BJ (cell line): ENCODE measurements at regions of chr13 and their contacts with region 1.

Region 1: GRCh38 chr13:98466634-98467236 is 110.2 kb downstream of the STK24 start:
- DNase-seq: no peak
- H3K4me3 ChIP-seq: no peak overlapping the region
- H3K27me3 ChIP-seq: no peaks in the 10 kb centered on the region
- CTCF ChIP-seq: peak; percentile 76

Region 2: DNA sequence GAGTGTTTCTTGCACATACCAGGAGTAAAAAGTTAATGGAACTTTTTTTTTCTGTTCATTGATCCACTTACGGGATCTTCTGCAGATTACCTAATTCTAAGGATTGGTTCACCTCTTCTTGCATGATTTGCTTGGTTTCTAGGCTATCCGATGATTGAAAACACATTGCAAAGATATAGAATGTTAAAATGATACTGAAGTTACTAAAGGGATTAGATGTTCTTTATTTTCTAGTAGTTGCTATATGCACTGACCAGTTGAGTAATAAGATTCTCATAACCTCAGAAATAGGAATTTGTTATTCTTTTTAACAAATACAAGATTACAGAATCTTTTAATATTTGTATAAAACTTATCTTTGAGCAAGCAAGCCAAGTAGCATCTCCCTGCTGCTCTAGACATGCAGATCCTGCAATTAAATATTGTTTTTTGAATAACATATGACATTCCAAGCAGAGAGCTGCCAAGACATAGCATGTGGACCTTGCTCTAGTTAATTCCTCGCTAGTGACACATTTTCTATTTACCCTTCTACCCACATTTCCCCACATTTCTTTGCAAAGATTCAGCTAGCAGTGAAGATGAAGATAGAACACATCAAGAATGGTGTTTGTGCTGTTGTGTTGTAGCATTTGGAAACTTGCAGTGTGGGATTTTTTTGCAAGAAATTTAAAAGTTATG is 237.9 kb before region 1 on chr13:
- CTCF ChIA-PET with region 1: no interaction called
- POLR2A ChIA-PET with region 1: no interaction called
- DNase-seq: peak; percentile 89
- H3K4me3 ChIP-seq: no peak overlapping the region
- H3K27me3 ChIP-seq: no peaks in the 10 kb centered on the region
- CTCF ChIP-seq: no peak

Region 3: DNA sequence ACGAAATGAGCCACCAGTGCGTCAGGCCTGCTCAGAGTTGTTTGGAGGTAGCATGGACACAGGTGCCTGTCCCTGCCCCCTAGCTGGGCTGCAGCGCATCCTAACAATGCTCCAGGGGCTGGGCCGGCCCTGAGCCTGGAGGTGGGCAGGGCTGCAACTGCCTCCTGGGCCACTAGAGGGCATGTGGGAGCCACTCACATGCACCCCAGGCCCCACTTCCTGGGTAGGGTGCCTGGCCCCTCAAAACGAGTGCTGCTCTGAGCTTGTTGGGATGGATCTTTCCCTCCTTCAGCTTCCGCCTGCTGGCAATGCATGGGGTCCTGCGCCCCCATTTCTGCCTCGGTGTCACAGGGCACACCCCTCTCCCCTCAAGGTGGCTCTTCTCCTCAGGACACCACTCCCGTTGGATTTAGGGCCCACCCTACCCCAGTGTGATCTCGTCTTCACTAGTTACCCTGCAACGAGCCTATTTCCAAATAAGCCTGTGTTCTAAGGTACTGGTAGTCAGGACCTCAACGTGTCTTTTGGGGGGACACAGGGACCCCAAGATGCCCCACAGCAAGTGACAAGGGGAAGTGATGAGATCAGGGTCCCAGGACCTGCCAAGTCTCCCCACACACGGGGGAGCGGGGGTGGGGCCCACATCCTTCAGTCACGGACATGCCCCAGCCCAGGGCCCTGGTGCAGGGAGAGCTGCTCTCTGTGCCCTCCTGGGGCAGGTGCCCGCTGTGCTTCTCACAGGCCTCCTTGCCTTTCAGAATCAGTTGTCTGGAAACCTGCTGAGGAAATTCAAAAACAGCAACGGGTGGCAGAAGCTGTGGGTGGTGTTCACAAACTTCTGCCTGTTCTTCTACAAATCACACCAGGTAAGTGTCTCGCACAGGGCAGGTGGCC is 21.1 kb before region 1 on chr13:
- CTCF ChIA-PET with region 1: interaction called, 15 read pairs
- POLR2A ChIA-PET with region 1: no interaction called
- DNase-seq: no peak
- H3K4me3 ChIP-seq: no peak overlapping the region
- H3K27me3 ChIP-seq: no peaks in the 10 kb centered on the region
- CTCF ChIP-seq: peak; percentile 99

Region 4: DNA sequence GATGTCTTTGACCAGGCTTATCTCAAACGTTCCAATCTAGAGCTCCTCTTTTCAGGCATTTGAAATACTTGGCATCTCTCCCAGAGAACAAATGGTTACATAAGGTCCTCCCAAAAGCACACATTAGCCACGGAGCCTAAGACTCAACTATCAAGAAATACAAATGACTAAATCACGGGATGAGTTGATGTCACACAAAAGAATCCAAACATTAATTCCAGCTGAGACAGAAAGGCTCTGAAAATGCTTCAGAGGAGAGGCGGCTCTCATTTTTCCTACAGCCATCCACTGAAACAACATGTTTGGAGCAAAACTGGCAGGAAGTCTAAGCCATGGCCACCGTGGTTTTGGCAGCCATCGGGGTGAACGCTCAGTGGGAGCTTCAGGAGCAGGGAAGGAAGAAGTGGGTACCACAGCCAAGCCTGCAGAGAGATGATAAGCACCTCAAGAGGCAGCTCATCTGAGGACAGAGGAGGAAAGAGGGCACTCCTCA is 12.3 kb before region 1 on chr13:
- CTCF ChIA-PET with region 1: interaction called, 33 read pairs
- POLR2A ChIA-PET with region 1: interaction called, 3 read pairs
- DNase-seq: peak; percentile 87
- H3K4me3 ChIP-seq: no peak overlapping the region
- H3K27me3 ChIP-seq: no peaks in the 10 kb centered on the region
- CTCF ChIP-seq: no peak

Region 5: DNA sequence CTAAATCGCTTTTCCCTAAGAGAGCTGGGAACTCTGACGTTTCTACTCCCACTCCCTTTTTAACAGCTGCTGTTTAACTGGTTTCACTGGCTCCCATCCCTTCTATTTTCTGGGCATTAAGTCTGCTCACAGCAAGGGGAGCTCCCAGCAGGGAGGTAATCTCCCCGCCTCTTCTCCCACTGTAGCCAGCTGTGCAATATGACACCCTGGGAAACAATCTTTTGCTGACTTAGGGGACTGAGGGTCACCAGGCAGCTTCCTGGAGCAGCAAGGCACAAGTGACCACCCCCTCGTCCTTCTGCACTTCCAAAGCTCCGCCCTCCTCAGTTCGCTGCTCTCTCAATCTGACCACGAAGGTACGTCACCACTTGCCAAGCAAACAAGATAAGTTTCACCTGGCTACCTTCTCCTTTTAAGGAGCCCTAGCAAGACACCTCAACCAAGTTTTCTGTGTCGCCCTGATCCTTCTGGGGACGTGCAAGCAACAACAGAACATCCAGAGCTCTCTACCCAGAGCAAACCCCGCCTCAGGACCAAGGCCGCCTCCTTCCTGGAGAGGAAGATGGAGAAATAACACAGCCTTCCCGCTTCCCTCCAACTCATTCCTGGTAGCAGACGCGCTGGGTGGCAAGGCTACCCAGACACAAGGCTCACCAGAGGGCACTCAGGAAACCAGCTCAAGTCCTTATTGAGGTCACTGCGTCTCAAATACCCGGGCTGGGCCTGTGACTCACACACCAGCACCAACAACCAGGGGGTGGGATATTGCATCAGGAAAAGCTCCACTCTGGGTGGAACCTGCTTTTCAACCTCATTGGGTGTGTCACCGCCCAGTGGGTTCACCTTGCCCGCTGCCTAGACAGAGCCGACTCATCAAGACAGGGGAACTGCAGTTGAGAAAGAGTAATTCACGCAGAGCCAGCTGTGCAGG is 17.8 kb after region 1 on chr13:
- CTCF ChIA-PET with region 1: interaction called, 13 read pairs
- POLR2A ChIA-PET with region 1: interaction called, 4 read pairs
- DNase-seq: peak; percentile 88
- H3K4me3 ChIP-seq: no peak overlapping the region
- H3K27me3 ChIP-seq: no peaks in the 10 kb centered on the region
- CTCF ChIP-seq: no peak

Region 6: DNA sequence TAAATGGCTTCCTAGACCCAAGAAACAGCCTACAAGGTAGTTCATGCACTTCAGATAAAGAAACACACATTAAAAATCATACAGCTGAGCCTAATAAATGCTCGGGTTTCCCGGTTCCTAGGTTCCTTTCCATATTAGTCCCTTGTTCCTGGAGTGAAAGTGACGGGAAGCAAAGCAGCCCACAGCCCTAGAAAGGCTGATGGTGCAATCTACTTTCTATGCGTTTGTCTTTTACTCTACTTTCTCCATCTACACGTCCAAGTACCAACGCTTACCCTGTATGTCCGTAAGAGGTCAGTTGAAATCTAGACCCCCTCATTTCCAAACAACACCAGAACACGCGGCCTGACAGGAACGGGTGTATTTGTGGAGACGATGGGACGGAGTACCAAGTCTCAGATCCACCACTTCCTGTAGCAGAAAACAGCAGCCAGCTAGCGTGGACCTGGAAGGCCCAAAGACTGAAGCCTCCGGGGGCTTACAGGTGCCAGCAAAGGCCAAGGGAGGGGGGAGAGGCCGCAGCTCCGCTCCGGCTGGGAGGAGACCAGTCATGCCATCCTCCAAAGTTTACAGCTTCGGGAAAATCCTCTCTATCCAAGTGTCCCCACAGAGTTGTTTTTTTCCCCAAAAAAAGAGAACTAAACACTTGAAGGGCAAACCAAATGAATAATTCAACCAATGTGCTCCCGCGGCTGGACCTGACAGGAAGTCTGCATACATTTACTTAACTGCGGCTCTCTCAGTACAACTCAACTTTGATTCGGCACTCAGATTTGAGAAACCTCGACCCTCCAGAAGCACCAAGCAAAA is 76.0 kb after region 1 on chr13:
- CTCF ChIA-PET with region 1: no interaction called
- POLR2A ChIA-PET with region 1: interaction called, 11 read pairs
- DNase-seq: no peak
- H3K4me3 ChIP-seq: no peak overlapping the region
- H3K27me3 ChIP-seq: no peaks in the 10 kb centered on the region
- CTCF ChIP-seq: no peak